ENCODE measurements at regions of chr10 and their contacts with region 1.

Region 1: DNA sequence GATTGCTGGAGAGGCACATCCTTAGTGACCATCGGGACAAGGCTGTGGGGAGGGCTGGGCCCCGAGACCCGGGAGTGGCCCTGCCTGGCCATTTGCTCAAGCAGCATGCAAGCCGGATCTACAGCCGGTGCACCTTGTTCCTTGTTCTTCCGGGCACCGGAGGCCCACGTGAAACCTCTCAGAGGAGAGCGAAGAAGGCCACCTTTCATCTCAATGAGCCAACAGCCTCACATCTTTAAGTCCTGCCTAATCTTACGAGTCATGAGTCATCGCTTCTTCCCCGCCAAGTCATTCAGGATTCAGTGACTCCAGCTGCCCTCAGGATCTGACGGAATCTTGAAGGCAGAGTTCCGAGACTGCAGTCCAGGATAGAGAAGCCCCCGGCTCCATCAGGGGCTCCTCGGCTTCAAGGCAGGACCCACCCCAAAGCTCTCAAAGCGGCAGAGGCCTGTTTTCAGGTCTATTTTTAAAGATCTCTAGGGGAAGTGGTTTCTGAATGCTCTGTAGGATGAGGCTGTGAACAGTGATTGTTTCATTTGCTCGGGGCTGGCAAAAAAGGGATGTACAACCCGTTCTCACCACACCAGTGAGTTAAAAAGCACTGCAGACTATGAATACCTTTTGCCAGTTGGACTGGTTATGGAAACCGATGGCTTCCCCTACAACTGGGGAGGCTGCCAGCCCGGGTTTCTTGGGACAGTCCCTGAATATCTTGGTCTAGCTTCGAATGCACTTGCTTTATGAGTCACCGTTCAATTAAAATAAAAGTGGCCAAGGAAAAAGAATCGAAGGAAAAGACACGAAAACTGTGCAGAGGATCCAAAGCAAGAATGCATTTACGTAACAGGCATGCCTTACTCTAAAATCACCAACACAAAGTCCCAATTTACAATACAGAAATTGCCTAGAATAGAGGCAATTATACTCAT is 57.2 kb upstream of the ECHDC3 start:
- DNase-seq: peak; percentile 94
- ATAC-seq: peak; percentile 83
- H3K4me3 ChIP-seq: peak overlapping the region; percentile 58
- H3K27ac ChIP-seq: peak overlapping the region; percentile 100
- H3K4me1 ChIP-seq: peaks cover 51% of the 10 kb centered on the region
- H3K27me3 ChIP-seq: no peaks in the 10 kb centered on the region
- CTCF ChIP-seq: no peak
- EP300 ChIP-seq: peak; percentile 66 to 68; a peak in 2 of 4 replicates
- POLR2A ChIP-seq: peak; percentile 79
- RAD21 ChIP-seq: peak; percentile 29

Region 2: GRCh38 chr10:11411926-11412545 is 272.9 kb before region 1 on chr10:
- CTCF ChIA-PET with region 1: no interaction called
- POLR2A ChIA-PET with region 1: no interaction called
- RAD21 ChIA-PET with region 1: no interaction called
- SMC1A ChIA-PET with region 1: no interaction called
- in situ Hi-C with region 1: no loop called
- intact Hi-C with region 1: no loop called
- DNase-seq: no peak
- ATAC-seq: peak; percentile 62
- H3K4me3 ChIP-seq: no peak overlapping the region
- H3K27ac ChIP-seq: no peak overlapping the region
- H3K4me1 ChIP-seq: no peaks in the 10 kb centered on the region; the same call in 1 of the 2 replicates
- H3K27me3 ChIP-seq: no peaks in the 10 kb centered on the region; a peak in 1 of 4 replicates
- CTCF ChIP-seq: peak; percentile 35 to 47 (median 37); a peak in 5 of 6 replicates
- EP300 ChIP-seq: no peak
- POLR2A ChIP-seq: no peak
- RAD21 ChIP-seq: peak; percentile 57

Region 3: DNA sequence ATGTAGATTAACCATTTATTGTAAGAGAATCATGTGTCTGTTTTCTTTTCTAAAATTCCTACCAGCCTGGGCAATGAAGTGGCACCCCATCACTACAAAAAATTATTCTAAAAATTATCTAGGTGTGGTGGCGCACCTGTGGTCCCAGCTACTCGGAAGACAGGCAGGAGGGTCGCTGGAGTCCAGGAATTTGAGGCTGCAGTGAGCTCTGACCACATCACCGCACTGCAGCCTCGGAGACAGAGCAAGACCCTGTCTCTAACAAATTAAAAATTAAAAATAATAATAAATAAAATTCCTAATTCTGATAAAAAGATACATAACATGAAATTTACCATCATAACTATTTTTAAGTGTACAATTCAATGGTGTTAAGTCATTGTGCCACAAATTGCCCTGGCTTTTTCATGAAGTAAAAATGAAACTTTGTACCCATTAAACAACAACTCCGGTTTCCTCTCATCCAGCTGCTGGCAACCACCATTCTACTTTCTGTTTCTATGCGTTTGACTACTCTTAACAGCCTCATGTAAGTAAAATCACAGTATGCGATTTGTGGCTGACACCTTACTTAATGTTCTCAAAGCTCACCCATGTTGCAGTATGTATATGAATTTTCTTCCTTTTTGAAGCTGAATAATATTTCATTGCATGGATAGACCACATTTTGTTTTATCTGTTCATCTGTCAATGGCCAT is 52.9 kb before region 1 on chr10:
- CTCF ChIA-PET with region 1: interaction called, 9 read pairs
- POLR2A ChIA-PET with region 1: interaction called, 5 read pairs
- RAD21 ChIA-PET with region 1: interaction called, 11 read pairs
- SMC1A ChIA-PET with region 1: interaction called, 25 read pairs
- in situ Hi-C with region 1: no loop called
- intact Hi-C with region 1: loop called (anchors 5 kb)
- DNase-seq: peak; percentile 88
- ATAC-seq: peak; percentile 100
- H3K4me3 ChIP-seq: no peak overlapping the region
- H3K27ac ChIP-seq: peak overlapping the region; percentile 25; the same call in 1 of the 2 replicates
- H3K4me1 ChIP-seq: peaks cover 13% of the 10 kb centered on the region
- H3K27me3 ChIP-seq: no peaks in the 10 kb centered on the region
- CTCF ChIP-seq: no peak
- EP300 ChIP-seq: peak; percentile 66 to 73; a peak in 3 of 4 replicates
- POLR2A ChIP-seq: no peak
- RAD21 ChIP-seq: no peak

Region 4: DNA sequence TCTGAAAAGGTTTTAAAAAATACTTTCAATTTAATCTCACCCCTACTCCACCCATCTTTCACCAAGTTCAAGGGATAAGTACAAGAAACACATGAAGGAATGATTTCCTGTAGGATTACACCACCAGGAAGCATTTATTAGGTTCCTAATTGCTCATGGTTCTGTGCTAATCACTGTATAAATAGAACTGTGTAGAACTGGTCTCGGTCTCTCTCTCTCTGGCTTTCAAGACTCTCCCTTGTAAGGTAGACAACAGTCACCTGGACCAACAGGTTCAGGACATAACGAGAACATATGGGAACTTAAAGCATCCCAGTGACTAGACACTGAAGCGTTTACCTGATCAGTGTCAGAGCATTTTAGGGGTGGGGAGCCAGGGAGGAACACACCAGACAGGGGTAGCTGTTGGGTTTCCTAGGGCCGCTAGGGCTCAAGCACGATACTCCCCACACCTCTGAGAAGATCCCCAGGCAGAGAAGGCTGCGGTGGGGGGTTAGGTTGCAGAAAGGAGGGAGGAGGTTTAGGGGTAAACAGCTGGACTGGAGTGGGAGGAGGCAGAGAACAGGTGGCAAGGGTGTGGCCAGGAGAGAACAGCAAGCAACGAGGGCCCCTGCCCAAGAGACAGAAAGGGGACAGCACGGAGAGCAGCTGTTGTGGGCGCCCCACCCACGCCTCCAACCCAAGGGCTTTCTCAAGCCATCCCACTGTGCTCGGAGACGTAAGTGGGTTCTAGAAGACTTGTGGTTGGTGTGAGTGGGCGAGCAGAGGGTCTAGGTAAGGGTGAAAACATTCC is 21.0 kb before region 1 on chr10:
- CTCF ChIA-PET with region 1: no interaction called
- POLR2A ChIA-PET with region 1: no interaction called
- RAD21 ChIA-PET with region 1: no interaction called
- SMC1A ChIA-PET with region 1: no interaction called
- in situ Hi-C with region 1: no loop called
- intact Hi-C with region 1: no loop called
- DNase-seq: no peak
- ATAC-seq: peak; percentile 81
- H3K4me3 ChIP-seq: no peak overlapping the region
- H3K27ac ChIP-seq: peak overlapping the region; percentile 35; the same call in 1 of the 2 replicates
- H3K4me1 ChIP-seq: peaks cover 43% of the 10 kb centered on the region
- H3K27me3 ChIP-seq: no peaks in the 10 kb centered on the region
- CTCF ChIP-seq: peak in 1 of 3 experiments; percentile 4; a peak in 1 of 6 replicates
- EP300 ChIP-seq: peak in 1 of 2 experiments; percentile 30; a peak in 1 of 4 replicates
- POLR2A ChIP-seq: no peak
- RAD21 ChIP-seq: peak; percentile 21; the same call in 1 of the 2 replicates

Region 5: GRCh38 chr10:11713186-11713743 is 28.3 kb after region 1 on chr10:
- CTCF ChIA-PET with region 1: interaction called, 3 read pairs
- POLR2A ChIA-PET with region 1: interaction called, 5 read pairs
- RAD21 ChIA-PET with region 1: interaction called, 8 read pairs
- SMC1A ChIA-PET with region 1: interaction called, 7 read pairs
- in situ Hi-C with region 1: no loop called
- intact Hi-C with region 1: loop called (anchors 1 kb)
- DNase-seq: peak; percentile 59
- ATAC-seq: peak; percentile 31
- H3K4me3 ChIP-seq: no peak overlapping the region
- H3K27ac ChIP-seq: no peak overlapping the region; the same call in 1 of the 2 replicates
- H3K4me1 ChIP-seq: peaks cover 42% of the 10 kb centered on the region
- H3K27me3 ChIP-seq: no peaks in the 10 kb centered on the region
- CTCF ChIP-seq: no peak
- EP300 ChIP-seq: 0 out of 4 replicates have a peak, but pooled peaks of 1 of the 2 experiments have one; percentile 10
- POLR2A ChIP-seq: no peak
- RAD21 ChIP-seq: no peak